ENCODE measurements at regions of chr7 and their contacts with region 1.

Region 1: DNA sequence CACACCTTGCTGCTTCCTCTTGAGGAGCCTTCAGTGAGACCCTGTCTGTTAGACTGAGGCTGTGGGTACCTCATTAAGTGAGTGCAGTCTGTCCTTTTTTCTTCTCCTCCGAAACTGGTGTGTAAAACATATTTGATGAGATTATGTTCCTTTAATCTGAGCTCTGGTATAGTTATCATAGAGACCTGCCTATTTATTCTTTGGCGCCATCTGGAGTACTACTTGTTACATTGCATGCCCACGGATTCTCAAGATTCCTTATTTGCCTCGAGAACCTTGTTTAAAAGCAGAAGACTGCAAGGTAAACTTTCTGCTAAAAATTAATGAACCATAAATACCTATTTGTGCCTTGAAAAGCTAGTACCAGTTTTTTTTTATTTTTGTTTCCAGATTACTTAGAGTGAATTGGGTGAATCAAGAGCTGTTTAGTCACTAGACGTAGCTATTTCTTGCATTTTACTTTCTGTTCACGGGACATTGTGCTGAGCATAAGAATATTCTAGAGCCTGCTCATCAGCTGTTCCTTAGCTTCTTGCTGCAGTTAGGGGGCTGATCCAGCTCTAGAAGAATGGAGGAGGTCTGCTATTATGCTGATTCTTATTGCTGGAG is 16.9 kb upstream of the STMP1 start:
- DNase-seq: no peak
- H3K4me3 ChIP-seq: no peak overlapping the region
- H3K27ac ChIP-seq: no peak overlapping the region
- H3K4me1 ChIP-seq: no peaks in the 10 kb centered on the region
- H3K27me3 ChIP-seq: no peaks in the 10 kb centered on the region
- CTCF ChIP-seq: peak; percentile 57 to 73 (median 68)
- EP300 ChIP-seq: no peak
- POLR2A ChIP-seq: no peak

Region 2: DNA sequence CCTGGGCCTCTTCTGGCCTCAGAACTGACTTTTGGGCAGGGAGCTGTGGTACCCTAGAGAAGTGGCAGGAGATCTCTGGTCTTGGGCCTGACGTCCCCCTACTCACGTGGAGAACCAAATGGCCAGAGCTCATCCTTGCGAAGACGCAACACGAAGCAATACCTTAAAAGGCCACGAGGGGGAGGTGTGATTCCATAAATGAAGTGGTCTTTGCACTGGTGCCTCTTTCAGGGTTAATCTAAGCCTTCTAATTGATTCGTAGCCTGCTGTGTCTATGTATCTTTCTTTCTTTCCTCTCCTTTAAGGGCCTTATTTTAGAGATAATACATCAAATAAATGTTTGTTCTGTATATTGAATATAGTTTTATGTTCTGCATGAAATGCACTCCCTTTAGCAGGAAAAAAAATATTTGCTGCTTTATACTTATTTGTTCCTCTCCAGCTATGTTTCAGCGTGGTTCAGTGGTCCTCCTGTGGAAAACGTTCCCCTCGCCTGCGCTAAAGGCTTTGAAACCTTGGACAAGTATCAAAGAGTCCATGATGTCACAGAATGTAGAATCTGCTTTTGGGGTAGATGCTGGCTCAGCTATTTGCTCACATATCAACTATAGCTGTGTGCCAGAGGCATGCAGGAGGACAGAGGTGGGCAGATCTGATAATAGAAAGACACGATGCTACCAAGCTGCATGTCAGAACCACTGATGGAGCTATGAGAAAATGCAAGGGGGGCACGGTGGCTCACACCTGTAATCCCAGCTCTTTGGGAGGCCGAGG is 370.7 kb before region 1 on chr7:
- in situ Hi-C with region 1: loop called in 1 of 4 experiments (anchors 10 kb)
- intact Hi-C with region 1: loop called (anchors 10 kb)
- DNase-seq: peak; percentile 73
- H3K4me3 ChIP-seq: no peak overlapping the region
- H3K27ac ChIP-seq: no peak overlapping the region
- H3K4me1 ChIP-seq: no peaks in the 10 kb centered on the region
- H3K27me3 ChIP-seq: peaks cover 9% of the 10 kb centered on the region
- CTCF ChIP-seq: peak; percentile 80 to 88 (median 86)
- EP300 ChIP-seq: no peak
- POLR2A ChIP-seq: no peak

Region 3: GRCh38 chr7:135281363-135281949 is 363.9 kb before region 1 on chr7:
- in situ Hi-C with region 1: loop called in 2 of 4 experiments (anchors 10 kb)
- intact Hi-C with region 1: loop called (anchors 10 kb)
- DNase-seq: peak; percentile 82
- H3K4me3 ChIP-seq: no peak overlapping the region
- H3K27ac ChIP-seq: no peak overlapping the region
- H3K4me1 ChIP-seq: peaks cover 0 to 9% (median 3%) of the 10 kb centered on the region in 4 donors
- H3K27me3 ChIP-seq: peaks cover 18% of the 10 kb centered on the region
- CTCF ChIP-seq: peak; percentile 82 to 97 (median 87)
- EP300 ChIP-seq: no peak
- POLR2A ChIP-seq: no peak

Region 4: DNA sequence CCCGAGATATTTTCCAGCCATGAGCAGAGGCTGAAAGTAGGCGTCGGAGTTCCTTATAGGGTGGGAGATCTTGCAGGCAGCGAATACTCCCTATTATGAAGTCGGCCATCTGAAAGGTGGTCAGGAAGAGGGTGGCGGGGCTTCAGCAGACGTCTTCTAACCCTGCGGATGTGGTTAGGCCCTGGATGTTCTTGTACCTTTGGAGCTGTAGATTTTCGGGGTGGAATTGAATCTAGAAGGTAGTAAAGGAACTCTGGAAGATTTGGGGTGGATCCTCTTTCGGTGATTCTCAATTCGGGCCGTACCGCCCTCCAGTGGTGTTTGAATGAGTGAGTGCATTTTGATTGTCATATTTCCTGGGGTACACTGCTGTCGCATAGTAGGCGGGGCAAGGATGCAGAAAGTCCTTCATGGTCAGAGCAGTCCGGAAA is 87.0 kb before region 1 on chr7:
- in situ Hi-C with region 1: no loop called
- intact Hi-C with region 1: no loop called
- DNase-seq: peak; percentile 59
- H3K4me3 ChIP-seq: peak overlapping the region; percentile 63 to 80 (median 75)
- H3K27ac ChIP-seq: peak overlapping the region; percentile 91 to 93 (median 92)
- H3K4me1 ChIP-seq: peaks cover 0 to 20% (median 7%) of the 10 kb centered on the region in 4 donors
- H3K27me3 ChIP-seq: no peaks in the 10 kb centered on the region
- CTCF ChIP-seq: peak; percentile 33 to 41 (median 38)
- EP300 ChIP-seq: no peak
- POLR2A ChIP-seq: no peak